Sigmoid colon (tissue), 7 donors: ENCODE measurements at regions of chr5 and their contacts with region 1.

Region 1: GRCh38 chr5:140244525-140245025 is 58.3 kb downstream of the PFDN1 start:
- DNase-seq: peak; percentile 96
- H3K4me3 ChIP-seq: no peak overlapping the region
- H3K27ac ChIP-seq: peak overlapping the region; percentile 0 to 91 (median 80)
- H3K4me1 ChIP-seq: peaks cover 0 to 88% (median 79%) of the 10 kb centered on the region in 4 donors
- H3K27me3 ChIP-seq: no peaks in the 10 kb centered on the region
- CTCF ChIP-seq: peak; percentile 84 to 96 (median 92)
- EP300 ChIP-seq: no peak
- POLR2A ChIP-seq: no peak

Region 2: DNA sequence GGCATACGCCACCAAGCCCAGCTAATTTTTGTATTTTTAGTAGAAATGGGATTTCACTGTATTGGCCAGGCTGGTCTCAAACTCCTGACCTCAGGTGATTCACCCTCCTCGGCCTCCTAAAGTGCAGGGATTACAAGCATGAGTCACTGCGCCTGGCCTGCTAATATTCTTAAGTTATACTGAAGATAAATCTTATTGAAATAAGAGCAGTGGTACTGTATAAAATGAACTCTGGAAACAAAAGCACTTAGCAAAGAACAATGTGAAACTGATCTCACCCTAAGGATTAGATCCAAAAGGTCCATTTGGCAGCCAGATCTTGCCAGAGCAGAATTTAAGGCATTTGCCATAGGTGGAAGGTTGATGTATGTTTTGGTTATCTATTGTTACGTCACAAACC is 42.5 kb before region 1 on chr5:
- intact Hi-C with region 1: no loop called
- DNase-seq: no peak
- H3K4me3 ChIP-seq: no peak overlapping the region
- H3K27ac ChIP-seq: no peak overlapping the region
- H3K4me1 ChIP-seq: peaks cover 0 to 8% (median 3%) of the 10 kb centered on the region in 4 donors
- H3K27me3 ChIP-seq: no peaks in the 10 kb centered on the region
- CTCF ChIP-seq: no peak
- EP300 ChIP-seq: no peak
- POLR2A ChIP-seq: no peak

Region 3: DNA sequence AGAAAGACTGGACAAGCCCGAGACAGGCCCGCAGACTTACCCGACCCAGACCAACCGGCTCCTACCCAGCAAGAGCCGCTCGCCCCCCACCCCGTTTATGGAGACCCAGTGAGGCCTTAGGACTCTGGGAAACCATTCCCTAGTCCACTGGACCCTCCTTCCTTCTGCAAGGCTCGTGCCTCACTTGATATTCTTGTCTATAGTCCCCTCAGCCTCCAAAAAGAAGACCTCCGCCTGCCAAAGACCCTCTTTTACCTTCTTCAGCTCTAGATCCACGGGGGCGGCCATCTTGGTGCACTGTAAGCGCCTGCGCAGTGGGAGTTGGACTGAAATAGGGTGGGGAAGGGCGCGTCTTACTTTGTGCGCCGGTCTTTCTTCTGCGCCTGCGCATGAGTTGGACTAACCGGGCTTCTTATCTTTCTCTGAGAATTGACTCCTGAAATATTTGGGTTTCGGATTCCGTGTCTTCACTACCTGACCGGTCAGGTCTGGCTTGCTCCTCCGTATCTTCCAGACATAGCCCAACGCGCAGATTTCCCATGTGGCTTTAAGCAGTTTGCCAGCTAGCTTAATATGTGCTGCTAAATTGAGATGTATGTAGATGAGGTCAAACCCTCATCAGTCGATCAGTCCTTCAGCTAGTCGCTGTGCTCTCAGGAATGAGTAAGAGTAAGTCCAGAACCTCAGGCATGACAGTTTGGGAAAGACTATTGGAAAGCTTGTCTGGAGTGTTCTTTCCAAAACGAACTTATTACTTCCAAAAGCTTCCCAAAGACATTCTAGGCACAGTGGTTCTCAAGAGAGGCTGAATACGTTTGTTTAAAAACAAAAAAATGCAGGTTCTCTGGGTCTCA is 58.4 kb after region 1 on chr5 and contains the start of gene PFDN1:
- intact Hi-C with region 1: loop called (anchors 2 kb)
- DNase-seq: peak; percentile 98
- H3K4me3 ChIP-seq: peak within 1 kb of the TSS; percentile 66 to 88 (median 77)
- H3K27ac ChIP-seq: peak within 1 kb of the TSS; percentile 81 to 89 (median 84)
- H3K4me1 ChIP-seq: peaks cover 0 to 50% (median 30%) of the 10 kb centered on the region in 4 donors
- H3K27me3 ChIP-seq: no peaks in the 10 kb centered on the region
- CTCF ChIP-seq: no peak
- EP300 ChIP-seq: no peak
- POLR2A ChIP-seq: peak in 1 of 2 donors; percentile 42
- total RNA-seq, gene PFDN1: 88.2 to 159 (median 123) TPM

Region 4: DNA sequence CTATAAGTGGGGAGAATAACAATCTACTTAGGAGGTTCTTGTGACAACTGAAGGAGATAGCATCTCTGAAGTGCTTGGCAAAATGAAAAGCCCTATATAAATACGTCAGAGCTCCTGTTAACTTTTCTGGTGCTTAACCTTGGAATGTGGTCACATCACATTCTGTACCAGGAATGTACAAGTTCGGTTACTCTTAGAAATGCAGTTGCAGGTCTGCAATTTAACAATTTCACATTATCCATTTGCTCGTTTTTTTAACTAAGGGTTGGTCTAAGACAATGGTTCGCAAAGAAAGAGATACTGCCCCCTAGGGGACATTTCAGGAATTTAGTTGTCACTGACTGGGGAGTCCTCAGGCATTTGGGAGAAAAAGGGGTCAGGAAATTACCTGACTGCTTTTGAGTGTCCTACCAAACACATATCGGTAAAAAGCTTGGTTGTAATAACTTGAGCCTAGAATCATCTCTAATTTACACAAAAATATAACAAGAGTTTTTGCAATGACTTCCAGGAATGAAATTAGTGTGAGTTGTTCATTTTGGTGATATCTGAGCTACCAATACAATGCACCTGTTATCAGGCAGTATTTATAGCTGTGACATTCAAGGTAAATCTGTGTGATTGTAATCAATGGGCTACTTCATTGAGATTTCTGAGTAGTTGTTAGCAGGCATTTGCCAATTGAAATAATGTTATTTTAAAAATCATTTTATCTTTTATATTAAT is 107.2 kb after region 1 on chr5:
- intact Hi-C with region 1: loop called (anchors 1 kb)
- DNase-seq: no peak
- H3K4me3 ChIP-seq: no peak overlapping the region
- H3K27ac ChIP-seq: no peak overlapping the region
- H3K4me1 ChIP-seq: peaks cover 0 to 12% (median 7%) of the 10 kb centered on the region in 4 donors
- H3K27me3 ChIP-seq: no peaks in the 10 kb centered on the region
- CTCF ChIP-seq: peak; percentile 81 to 96 (median 87)
- EP300 ChIP-seq: no peak
- POLR2A ChIP-seq: no peak

Region 5: GRCh38 chr5:140557136-140557805 is 312.7 kb after region 1 on chr5 and contains the start of gene SRA1:
- intact Hi-C with region 1: loop called (anchors 10 kb)
- DNase-seq: peak; percentile 96
- H3K4me3 ChIP-seq: peak within 1 kb of the TSS; percentile 75 to 83 (median 78)
- H3K27ac ChIP-seq: peak within 1 kb of the TSS; percentile 82 to 98 (median 92)
- H3K4me1 ChIP-seq: peaks cover 0 to 43% (median 33%) of the 10 kb centered on the region in 4 donors
- H3K27me3 ChIP-seq: no peaks in the 10 kb centered on the region
- CTCF ChIP-seq: no peak
- EP300 ChIP-seq: peak in 2 of 4 donors; percentile 46 to 55
- POLR2A ChIP-seq: peak; percentile 80 to 92
- total RNA-seq, gene SRA1: 17.8 to 30.5 (median 21.1) TPM